Common myeloid progenitor, CD34-positive (primary cell): ENCODE measurements at regions of chr20 and their contacts with region 1.

Region 1: DNA sequence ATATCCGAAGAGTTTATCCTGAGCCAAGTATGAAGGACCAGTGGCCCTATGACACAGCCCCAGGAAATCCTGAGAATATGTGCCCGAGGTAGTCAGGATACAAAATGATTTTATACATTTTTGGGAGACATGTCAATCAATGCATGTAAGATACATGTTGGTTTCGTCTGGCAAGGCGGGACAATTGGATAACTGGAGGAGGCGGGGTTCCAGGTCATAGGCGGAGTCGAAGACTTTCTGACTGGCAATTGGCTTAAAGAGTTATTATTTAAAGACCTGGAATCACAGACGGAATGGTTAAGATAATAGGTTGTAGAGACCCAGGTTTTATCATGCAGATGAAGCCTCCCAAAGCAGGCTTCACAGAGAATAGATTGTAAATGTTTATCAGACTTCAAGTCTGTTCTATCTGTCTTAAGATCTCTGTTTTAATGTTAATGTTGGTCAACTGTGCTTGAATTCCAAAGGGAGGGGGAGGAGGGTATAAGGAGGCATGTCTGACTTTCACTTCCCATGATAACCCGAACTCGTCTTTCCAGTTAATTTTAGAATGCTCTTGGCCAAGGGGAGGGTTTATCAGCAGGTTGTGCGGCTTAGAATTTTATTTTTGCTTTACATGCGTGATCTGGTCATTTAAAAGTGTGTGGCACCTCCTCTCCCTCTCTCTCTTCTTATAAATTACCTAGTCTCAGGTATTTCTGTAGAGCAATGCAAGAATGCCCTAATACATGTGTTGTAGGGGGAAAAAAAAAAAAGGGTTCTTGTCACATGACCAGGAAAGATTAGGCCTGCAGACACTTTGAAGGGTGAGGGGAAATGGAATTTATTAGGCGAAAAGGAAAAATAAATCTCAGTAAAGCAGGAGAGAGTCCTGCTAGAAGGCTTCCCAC is 230.7 kb downstream of the NFATC2 start:
- DNase-seq: no peak
- H3K4me3 ChIP-seq: no peak overlapping the region
- H3K27ac ChIP-seq: no peak overlapping the region
- H3K4me1 ChIP-seq: no peaks in the 10 kb centered on the region
- H3K27me3 ChIP-seq: peaks cover 3 to 13% (median 9%) of the 10 kb centered on the region in 5 experiments

Region 2: DNA sequence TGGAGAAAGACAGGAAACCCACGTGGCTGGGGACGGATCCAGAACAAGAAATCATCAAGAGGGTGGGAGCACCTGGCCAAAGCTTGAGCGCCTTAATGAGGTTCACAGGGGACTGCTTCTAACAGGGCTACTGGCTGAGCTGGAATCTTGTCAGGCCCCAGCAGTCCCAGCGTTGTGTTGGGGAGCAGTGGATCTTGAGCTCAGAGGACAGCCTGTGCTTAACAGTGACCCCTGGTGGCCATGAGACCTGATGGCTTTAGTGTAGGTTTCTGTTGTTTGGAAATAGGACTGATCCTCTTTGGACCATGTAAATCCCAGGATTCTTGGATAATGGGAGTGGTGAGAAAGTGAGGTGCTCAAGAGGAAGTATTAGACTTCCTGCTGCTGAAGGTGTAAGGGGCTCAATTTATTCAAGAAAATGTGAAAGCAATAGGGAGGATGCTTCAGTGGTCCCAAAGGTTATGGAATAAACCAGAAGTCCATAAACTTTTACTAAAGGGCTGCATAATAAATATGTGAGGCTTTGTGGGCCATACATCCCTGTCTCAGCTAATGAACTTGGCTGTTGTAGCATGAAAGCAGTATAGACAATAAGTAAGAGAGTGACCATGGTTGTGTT is 14.5 kb after region 1 on chr20:
- CTCF ChIA-PET with region 1: interaction called, 13 read pairs
- POLR2A ChIA-PET with region 1: no interaction called
- DNase-seq: peak; percentile 30 to 66 (median 40)
- H3K4me3 ChIP-seq: no peak overlapping the region
- H3K27ac ChIP-seq: no peak overlapping the region
- H3K4me1 ChIP-seq: no peaks in the 10 kb centered on the region
- H3K27me3 ChIP-seq: peaks cover 0 to 3% (median 0%) of the 10 kb centered on the region in 5 experiments

Region 3: GRCh38 chr20:51428401-51429143 is 116.7 kb after region 1 on chr20:
- CTCF ChIA-PET with region 1: no interaction called
- POLR2A ChIA-PET with region 1: no interaction called
- DNase-seq: no peak
- H3K4me3 ChIP-seq: no peak overlapping the region
- H3K27ac ChIP-seq: no peak overlapping the region
- H3K4me1 ChIP-seq: peaks cover 4 to 25% (median 20%) of the 10 kb centered on the region in 4 experiments
- H3K27me3 ChIP-seq: no peaks in the 10 kb centered on the region